ENCODE measurements at regions of chr1 and their contacts with region 1.

Region 1: DNA sequence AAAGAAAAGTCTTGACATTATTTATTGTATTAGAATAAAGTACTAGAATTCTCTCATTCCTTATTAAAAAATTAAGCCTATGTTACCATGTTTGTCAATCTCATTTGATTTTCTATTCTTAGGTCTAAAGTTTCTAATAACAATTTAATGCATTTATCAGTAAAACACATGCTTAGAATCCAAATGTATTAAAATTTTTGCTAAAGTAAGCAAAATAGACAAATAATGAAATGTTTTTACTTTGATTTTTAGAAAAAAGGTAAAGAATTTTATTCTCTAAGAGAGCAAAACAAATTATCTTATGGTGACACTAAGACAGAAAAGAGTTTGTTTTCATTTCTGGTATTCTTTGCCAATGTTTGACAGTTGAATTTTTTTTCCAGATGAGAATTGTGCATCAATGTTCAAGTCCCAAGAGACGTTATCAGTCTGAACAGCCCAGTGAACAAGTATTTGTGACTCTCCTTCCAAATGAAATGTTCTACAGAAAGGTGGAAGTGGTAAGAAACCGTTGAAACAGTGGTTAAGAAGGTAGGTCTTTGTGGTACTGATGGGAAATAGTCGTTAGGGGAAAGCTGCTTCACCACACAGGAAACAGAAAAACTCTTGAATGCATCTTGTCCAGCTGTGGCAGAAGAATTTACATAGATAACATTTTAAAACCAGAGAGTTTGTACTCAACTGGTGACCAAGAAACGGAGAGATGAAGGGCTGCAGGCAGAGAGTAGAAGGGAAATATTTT is 402.5 kb downstream of the PTPRC start:
- DNase-seq: peak; percentile 54
- H3K4me3 Mint-ChIP-seq: peak overlapping the region; percentile 25
- H3K27ac Mint-ChIP-seq: peak overlapping the region; percentile 90
- H3K4me1 Mint-ChIP-seq: peaks cover 43% of the 10 kb centered on the region
- H3K27me3 Mint-ChIP-seq: no peaks in the 10 kb centered on the region

Region 2: GRCh38 chr1:198922638-198923430 is 118.5 kb before region 1 on chr1:
- CTCF ChIA-PET with region 1: no interaction called
- POLR2A ChIA-PET with region 1: interaction called, 11 read pairs
- DNase-seq: no peak
- H3K4me3 Mint-ChIP-seq: no peak overlapping the region
- H3K27ac Mint-ChIP-seq: peak overlapping the region; percentile 33
- H3K4me1 Mint-ChIP-seq: peaks cover 63% of the 10 kb centered on the region
- H3K27me3 Mint-ChIP-seq: no peaks in the 10 kb centered on the region

Region 3: DNA sequence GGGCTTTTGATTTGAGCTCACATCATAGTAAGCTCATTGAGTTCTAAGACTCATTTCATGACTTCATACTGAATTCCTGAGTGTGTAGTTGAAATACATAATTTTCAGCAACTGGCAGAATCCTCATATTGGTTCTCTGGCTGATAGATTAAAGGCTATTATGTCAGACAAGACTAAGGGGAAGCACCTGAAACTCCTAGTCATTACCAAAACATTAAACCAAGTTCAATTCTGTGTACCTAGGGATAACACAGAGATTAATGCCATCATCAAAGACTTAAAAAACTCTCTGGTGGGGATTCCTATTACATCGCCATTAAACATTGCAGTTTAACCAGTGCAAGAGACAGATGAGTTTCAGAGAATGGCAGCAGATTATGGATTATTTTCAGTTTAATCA is 63.4 kb before region 1 on chr1:
- CTCF ChIA-PET with region 1: no interaction called
- POLR2A ChIA-PET with region 1: no interaction called
- DNase-seq: no peak
- H3K4me3 Mint-ChIP-seq: no peak overlapping the region
- H3K27ac Mint-ChIP-seq: no peak overlapping the region
- H3K4me1 Mint-ChIP-seq: peaks cover 17% of the 10 kb centered on the region
- H3K27me3 Mint-ChIP-seq: no peaks in the 10 kb centered on the region

Region 4: DNA sequence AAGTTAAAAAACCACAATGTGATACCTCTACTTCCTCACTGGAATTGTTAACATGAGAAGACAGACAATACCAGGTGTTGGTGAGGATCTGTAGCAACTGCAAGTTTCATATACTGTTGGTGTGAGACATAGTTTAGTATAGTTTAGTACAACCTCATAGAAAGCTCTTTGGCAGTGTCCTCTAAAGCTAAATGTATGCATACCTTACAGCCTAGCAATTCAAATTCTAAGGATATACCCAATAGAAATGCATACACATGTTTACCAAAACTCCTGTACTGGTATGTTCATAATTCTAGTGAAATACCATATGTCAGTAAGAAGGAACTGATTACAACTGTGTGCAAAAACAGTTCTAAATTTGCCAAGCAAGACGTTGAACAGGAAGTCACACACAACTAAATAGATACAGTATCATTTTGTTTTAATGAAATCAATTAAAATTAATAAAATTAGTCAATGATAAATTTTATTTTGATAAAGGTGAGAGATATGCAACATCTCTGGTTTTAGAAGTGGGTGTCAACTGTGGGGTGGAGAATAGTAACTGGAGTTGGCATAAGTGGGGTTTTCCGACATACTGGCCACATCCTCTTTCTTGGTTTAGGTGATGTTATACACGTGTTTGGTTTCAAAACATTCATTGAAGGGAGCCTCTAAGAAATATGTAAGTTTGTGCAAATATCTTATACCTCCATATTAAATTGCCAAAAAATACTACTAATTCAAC is 48.2 kb after region 1 on chr1:
- CTCF ChIA-PET with region 1: no interaction called
- POLR2A ChIA-PET with region 1: interaction called, 12 read pairs
- DNase-seq: peak; percentile 60
- H3K4me3 Mint-ChIP-seq: no peak overlapping the region
- H3K27ac Mint-ChIP-seq: peak overlapping the region; percentile 63
- H3K4me1 Mint-ChIP-seq: peaks cover 42% of the 10 kb centered on the region
- H3K27me3 Mint-ChIP-seq: no peaks in the 10 kb centered on the region

Measured in activated CD4-positive, alpha-beta memory T cell treated with anti-CD3 and anti-CD28 coated beads, Interleukin-2, amount 10 ng/mL, durations not matched to agents 7 days and 5 days (primary cell).